IMR-90 (cell line): ENCODE measurements at regions of chr21 and their contacts with region 1.

Region 1: GRCh38 chr21:38126669-38127303 is 130.0 kb upstream of the KCNJ15 start:
- DNase-seq: peak; percentile 33
- ATAC-seq: peak; percentile 81
- H3K4me3 ChIP-seq: no peak overlapping the region
- H3K27ac ChIP-seq: no peak overlapping the region
- H3K4me1 ChIP-seq: no peaks in the 10 kb centered on the region
- H3K27me3 ChIP-seq: peaks cover 22% of the 10 kb centered on the region
- CTCF ChIP-seq: peak; percentile 77
- POLR2A ChIP-seq: no peak
- RAD21 ChIP-seq: peak; percentile 83

Region 2: GRCh38 chr21:37700641-37701202 is 426.1 kb before region 1 on chr21:
- CTCF ChIA-PET with region 1: interaction called, 7 read pairs
- POLR2A ChIA-PET with region 1: no interaction called
- dilution Hi-C with region 1: no loop called
- in situ Hi-C with region 1: no loop called
- intact Hi-C with region 1: loop called (anchors 1 kb)
- DNase-seq: peak; percentile 84
- ATAC-seq: peak; percentile 100
- H3K4me3 ChIP-seq: no peak overlapping the region
- H3K27ac ChIP-seq: no peak overlapping the region
- H3K4me1 ChIP-seq: no peaks in the 10 kb centered on the region
- H3K27me3 ChIP-seq: peaks cover 22% of the 10 kb centered on the region
- CTCF ChIP-seq: peak; percentile 78
- POLR2A ChIP-seq: no peak
- RAD21 ChIP-seq: peak; percentile 78

Region 3: GRCh38 chr21:38743761-38744529 is 617.2 kb after region 1 on chr21:
- CTCF ChIA-PET with region 1: no interaction called
- POLR2A ChIA-PET with region 1: no interaction called
- dilution Hi-C with region 1: no loop called
- in situ Hi-C with region 1: no loop called
- intact Hi-C with region 1: no loop called
- DNase-seq: no peak
- ATAC-seq: no peak
- H3K4me3 ChIP-seq: no peak overlapping the region
- H3K27ac ChIP-seq: no peak overlapping the region
- H3K4me1 ChIP-seq: no peaks in the 10 kb centered on the region
- H3K27me3 ChIP-seq: no peaks in the 10 kb centered on the region
- CTCF ChIP-seq: no peak
- POLR2A ChIP-seq: no peak
- RAD21 ChIP-seq: no peak